PC-3 (cell line): ENCODE measurements at regions of chr21 and their contacts with region 1.

Region 1: GRCh38 chr21:36156339-36156814 is 247 bp upstream of the DOP1B start:
- DNase-seq: peak; percentile 99
- ATAC-seq: peak; percentile 87
- H3K4me3 ChIP-seq: peak overlapping the region; percentile 96
- H3K27ac ChIP-seq: no peak overlapping the region
- H3K4me1 ChIP-seq: peaks cover 19% of the 10 kb centered on the region
- H3K27me3 ChIP-seq: no peaks in the 10 kb centered on the region
- CTCF ChIP-seq: no peak

Region 2: GRCh38 chr21:36202726-36203616 is 46.6 kb after region 1 on chr21:
- CTCF ChIA-PET with region 1: interaction called, 5 read pairs
- POLR2A ChIA-PET with region 1: interaction called, 13 read pairs
- intact Hi-C with region 1: loop called (anchors 1 kb)
- DNase-seq: peak; percentile 83
- ATAC-seq: peak; percentile 52
- H3K4me3 ChIP-seq: peak overlapping the region; percentile 52
- H3K27ac ChIP-seq: peak overlapping the region; percentile 99
- H3K4me1 ChIP-seq: peaks cover 51% of the 10 kb centered on the region
- H3K27me3 ChIP-seq: no peaks in the 10 kb centered on the region
- CTCF ChIP-seq: no peak